Ovary (tissue), 10 donors: ENCODE measurements at regions of chr15 and their contacts with region 1.

Region 1: GRCh38 chr15:94692670-94693069 is 461.3 kb downstream of the MCTP2 start:
- DNase-seq: no peak
- H3K4me3 ChIP-seq: no peak overlapping the region
- H3K27ac ChIP-seq: no peak overlapping the region
- H3K4me1 ChIP-seq: no peaks in the 10 kb centered on the region
- H3K27me3 ChIP-seq: no peaks in the 10 kb centered on the region
- CTCF ChIP-seq: no peak
- EP300 ChIP-seq: no peak
- POLR2A ChIP-seq: no peak

Region 2: GRCh38 chr15:94532226-94532625 is 160.4 kb before region 1 on chr15:
- intact Hi-C with region 1: no loop called
- DNase-seq: no peak
- H3K4me3 ChIP-seq: no peak overlapping the region
- H3K27ac ChIP-seq: no peak overlapping the region
- H3K4me1 ChIP-seq: peaks cover 2% of the 10 kb centered on the region
- H3K27me3 ChIP-seq: no peaks in the 10 kb centered on the region
- CTCF ChIP-seq: no peak
- EP300 ChIP-seq: no peak
- POLR2A ChIP-seq: no peak

Region 3: GRCh38 chr15:94631608-94632007 is 61.1 kb before region 1 on chr15:
- intact Hi-C with region 1: loop called in 1 of 4 experiments (anchors 10 kb)
- DNase-seq: no peak
- H3K4me3 ChIP-seq: no peak overlapping the region
- H3K27ac ChIP-seq: no peak overlapping the region
- H3K4me1 ChIP-seq: no peaks in the 10 kb centered on the region
- H3K27me3 ChIP-seq: no peaks in the 10 kb centered on the region
- CTCF ChIP-seq: no peak
- EP300 ChIP-seq: no peak
- POLR2A ChIP-seq: no peak

Region 4: GRCh38 chr15:94653071-94653470 is 39.6 kb before region 1 on chr15:
- intact Hi-C with region 1: no loop called
- DNase-seq: no peak
- H3K4me3 ChIP-seq: no peak overlapping the region
- H3K27ac ChIP-seq: no peak overlapping the region
- H3K4me1 ChIP-seq: no peaks in the 10 kb centered on the region
- H3K27me3 ChIP-seq: peaks cover 2% of the 10 kb centered on the region
- CTCF ChIP-seq: no peak
- EP300 ChIP-seq: no peak
- POLR2A ChIP-seq: no peak

Region 5: GRCh38 chr15:94722024-94722636 is 29.5 kb after region 1 on chr15:
- intact Hi-C with region 1: no loop called
- DNase-seq: no peak
- H3K4me3 ChIP-seq: no peak overlapping the region
- H3K27ac ChIP-seq: no peak overlapping the region
- H3K4me1 ChIP-seq: no peaks in the 10 kb centered on the region
- H3K27me3 ChIP-seq: no peaks in the 10 kb centered on the region
- CTCF ChIP-seq: no peak
- EP300 ChIP-seq: no peak
- POLR2A ChIP-seq: no peak

Region 6: DNA sequence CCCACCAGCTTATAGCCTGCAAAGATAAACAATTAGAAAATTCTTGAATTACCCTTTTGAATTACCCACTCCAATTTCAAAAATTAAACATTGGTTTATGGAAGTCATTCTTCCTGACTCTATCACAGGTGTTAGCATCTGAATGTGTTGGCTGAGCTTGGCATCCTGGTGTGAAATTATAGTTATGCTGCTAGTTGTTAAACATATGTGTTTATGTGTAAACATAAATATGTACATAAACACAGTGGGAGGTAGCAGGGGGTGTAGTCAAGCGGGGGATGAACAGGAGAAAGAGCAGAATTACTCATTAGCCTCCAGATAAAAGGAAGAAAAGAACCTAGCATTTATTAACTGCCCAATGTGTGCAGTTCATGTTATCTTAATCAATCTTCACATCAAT is 68.9 kb after region 1 on chr15:
- intact Hi-C with region 1: no loop called
- DNase-seq: no peak
- H3K4me3 ChIP-seq: no peak overlapping the region
- H3K27ac ChIP-seq: no peak overlapping the region
- H3K4me1 ChIP-seq: no peaks in the 10 kb centered on the region
- H3K27me3 ChIP-seq: no peaks in the 10 kb centered on the region
- CTCF ChIP-seq: no peak
- EP300 ChIP-seq: no peak
- POLR2A ChIP-seq: no peak